ENCODE measurements at regions of chr4 and their contacts with region 1.

Region 1: GRCh38 chr4:56544573-56545131 is 39.1 kb downstream of the ARL9 start:
- DNase-seq: peak; percentile 85
- H3K4me3 ChIP-seq: peak overlapping the region in 2 of 3 experiments; percentile 43 to 51
- H3K27ac ChIP-seq: no peak overlapping the region
- H3K4me1 ChIP-seq: peaks cover 3% of the 10 kb centered on the region
- H3K27me3 ChIP-seq: peaks cover 8 to 9% of the 10 kb centered on the region in 2 experiments
- CTCF ChIP-seq: peak; percentile 98 to 99
- POLR2A ChIP-seq: no peak

Region 2: DNA sequence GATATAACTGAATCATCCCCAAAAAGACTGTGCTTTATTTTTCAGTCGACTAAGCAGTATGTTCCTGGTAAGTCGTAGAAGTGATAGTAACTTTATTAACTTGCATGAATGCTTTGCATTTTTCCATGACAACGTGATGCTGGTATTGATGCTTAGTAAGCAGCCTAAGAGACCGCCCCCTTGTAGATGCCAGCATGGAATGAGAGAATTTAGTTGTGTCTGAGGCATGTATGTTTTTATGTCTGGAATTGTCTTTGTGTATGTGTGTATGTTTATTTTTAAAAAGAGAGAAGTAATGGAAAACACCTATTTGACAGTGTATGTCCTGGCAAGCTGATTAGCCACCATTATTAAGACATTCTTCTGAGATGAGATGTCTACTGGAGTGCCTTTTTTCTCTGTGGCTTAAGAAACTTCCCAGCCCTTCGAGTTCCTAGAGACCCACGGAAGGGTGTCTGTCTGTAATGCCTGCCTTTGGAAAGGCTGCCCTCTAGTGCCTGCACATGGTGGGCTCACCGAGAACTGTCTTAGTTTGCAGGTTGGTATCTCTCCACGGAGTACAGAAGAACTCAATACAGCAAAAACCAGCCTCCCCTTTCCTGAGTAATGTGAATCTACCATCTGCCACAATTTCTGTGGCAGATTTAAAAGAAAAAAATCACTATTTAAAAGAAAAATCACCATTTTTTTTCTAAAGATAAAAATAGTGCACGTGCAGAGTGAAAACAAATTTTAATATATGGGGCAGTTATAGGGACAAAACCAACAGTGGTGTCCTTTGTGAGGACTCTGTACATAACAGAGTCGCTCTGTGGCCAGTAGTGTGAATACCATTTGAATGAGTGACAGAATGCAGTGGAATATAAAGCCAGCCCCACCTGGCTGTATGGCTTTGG is 243.2 kb before region 1 on chr4:
- CTCF ChIA-PET with region 1: no interaction called
- POLR2A ChIA-PET with region 1: no interaction called
- dilution Hi-C with region 1: no loop called
- intact Hi-C with region 1: loop called (anchors 10 kb)
- DNase-seq: peak; percentile 84
- H3K4me3 ChIP-seq: peak overlapping the region in 1 of 3 experiments; percentile 23
- H3K27ac ChIP-seq: peak overlapping the region; percentile 35
- H3K4me1 ChIP-seq: no peaks in the 10 kb centered on the region
- H3K27me3 ChIP-seq: no peaks in the 10 kb centered on the region
- CTCF ChIP-seq: peak; percentile 90
- POLR2A ChIP-seq: no peak

Region 3: DNA sequence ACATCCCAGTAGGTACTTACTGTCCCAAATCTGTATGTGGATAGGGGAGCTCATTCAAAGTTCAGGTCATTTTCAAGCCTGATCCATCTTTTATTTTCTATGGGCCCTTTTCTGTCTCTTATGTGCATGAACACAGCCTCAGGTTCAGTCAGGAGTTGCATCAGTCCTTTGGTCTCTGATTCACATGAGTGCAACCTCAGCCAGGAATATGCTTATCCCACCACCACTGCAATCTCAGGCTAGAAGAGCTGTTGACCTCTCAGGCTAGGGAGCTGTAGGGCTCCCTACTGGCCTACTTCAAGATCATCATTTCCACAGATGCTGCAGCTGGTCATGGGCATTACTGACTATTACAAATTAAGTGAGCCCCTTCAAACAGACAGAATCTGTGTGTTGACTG is 184.6 kb before region 1 on chr4:
- CTCF ChIA-PET with region 1: no interaction called
- POLR2A ChIA-PET with region 1: no interaction called
- dilution Hi-C with region 1: no loop called
- intact Hi-C with region 1: no loop called
- DNase-seq: no peak
- H3K4me3 ChIP-seq: no peak overlapping the region
- H3K27ac ChIP-seq: no peak overlapping the region
- H3K4me1 ChIP-seq: no peaks in the 10 kb centered on the region
- H3K27me3 ChIP-seq: no peaks in the 10 kb centered on the region
- CTCF ChIP-seq: no peak
- POLR2A ChIP-seq: no peak

Region 4: GRCh38 chr4:56424697-56425514 is 119.7 kb before region 1 on chr4:
- CTCF ChIA-PET with region 1: interaction called, 4 read pairs
- POLR2A ChIA-PET with region 1: no interaction called
- dilution Hi-C with region 1: no loop called
- intact Hi-C with region 1: loop called (anchors 1 kb)
- DNase-seq: peak; percentile 61
- H3K4me3 ChIP-seq: no peak overlapping the region
- H3K27ac ChIP-seq: no peak overlapping the region
- H3K4me1 ChIP-seq: peaks cover 6% of the 10 kb centered on the region
- H3K27me3 ChIP-seq: no peaks in the 10 kb centered on the region
- CTCF ChIP-seq: peak; percentile 40 to 45
- POLR2A ChIP-seq: no peak

Region 5: GRCh38 chr4:56435306-56435926 is 109.2 kb before region 1 on chr4 and contains the start of gene PPAT:
- CTCF ChIA-PET with region 1: no interaction called
- POLR2A ChIA-PET with region 1: no interaction called
- dilution Hi-C with region 1: no loop called
- intact Hi-C with region 1: loop called (anchors 5 kb)
- DNase-seq: peak; percentile 100
- H3K4me3 ChIP-seq: peak within 1 kb of the TSS; percentile 77 to 86 (median 83)
- H3K27ac ChIP-seq: peak within 1 kb of the TSS; percentile 87
- H3K4me1 ChIP-seq: peaks cover 19% of the 10 kb centered on the region
- H3K27me3 ChIP-seq: no peaks in the 10 kb centered on the region
- CTCF ChIP-seq: peak in 1 of 2 donors; percentile 25
- POLR2A ChIP-seq: peak; percentile 83
- total RNA-seq, gene PPAT: 21.8 and 25.5 TPM in 2 replicates

Region 6: DNA sequence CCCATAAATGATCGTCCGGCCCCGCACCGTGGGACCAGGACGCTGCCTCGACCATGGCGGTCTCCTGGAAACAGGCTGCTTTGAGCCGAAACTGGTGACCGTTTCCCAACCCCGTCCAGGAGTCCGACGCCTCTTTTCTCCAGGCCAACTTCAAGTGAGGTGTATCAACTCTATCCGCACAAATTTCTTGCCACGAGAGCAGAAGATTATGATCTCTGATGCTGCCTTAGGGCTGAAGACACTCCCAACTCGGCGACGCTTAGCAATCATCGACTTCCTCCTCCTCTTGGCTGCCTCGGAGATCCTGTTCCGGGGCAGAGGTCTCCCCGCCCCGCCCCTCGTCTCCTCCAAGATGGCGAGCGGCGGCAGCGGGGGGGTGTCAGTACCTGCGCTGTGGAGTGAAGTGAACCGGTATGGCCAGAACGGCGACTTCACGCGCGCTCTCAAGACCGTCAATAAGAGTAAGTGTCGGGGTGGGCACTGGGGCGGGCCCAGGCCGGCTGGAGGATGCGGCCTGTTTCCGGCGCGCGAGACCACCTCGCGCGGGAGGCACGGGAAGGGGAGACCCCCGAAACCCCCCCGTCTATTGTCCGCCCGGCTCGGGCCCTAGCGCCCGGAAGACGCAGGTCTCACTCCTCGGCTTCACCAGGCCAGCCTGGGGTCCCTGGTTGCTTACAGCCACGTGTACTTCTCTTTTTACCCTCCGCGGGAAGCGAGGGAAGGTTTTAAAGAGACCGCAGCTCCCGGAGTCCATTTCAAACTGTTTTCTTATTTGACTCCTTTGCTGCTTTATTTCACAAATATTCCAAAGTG is 77.2 kb before region 1 on chr4 and contains the start of gene SRP72:
- CTCF ChIA-PET with region 1: interaction called, 7 read pairs
- POLR2A ChIA-PET with region 1: no interaction called
- dilution Hi-C with region 1: no loop called
- intact Hi-C with region 1: loop called (anchors 1 kb)
- DNase-seq: peak; percentile 91
- H3K4me3 ChIP-seq: peak within 1 kb of the TSS; percentile 67 to 99 (median 98)
- H3K27ac ChIP-seq: peak within 1 kb of the TSS; percentile 94
- H3K4me1 ChIP-seq: peaks cover 27% of the 10 kb centered on the region
- H3K27me3 ChIP-seq: no peaks in the 10 kb centered on the region
- CTCF ChIP-seq: no peak
- POLR2A ChIP-seq: peak; percentile 90
- total RNA-seq, gene SRP72: 132 and 145 TPM in 2 replicates

Region 7: DNA sequence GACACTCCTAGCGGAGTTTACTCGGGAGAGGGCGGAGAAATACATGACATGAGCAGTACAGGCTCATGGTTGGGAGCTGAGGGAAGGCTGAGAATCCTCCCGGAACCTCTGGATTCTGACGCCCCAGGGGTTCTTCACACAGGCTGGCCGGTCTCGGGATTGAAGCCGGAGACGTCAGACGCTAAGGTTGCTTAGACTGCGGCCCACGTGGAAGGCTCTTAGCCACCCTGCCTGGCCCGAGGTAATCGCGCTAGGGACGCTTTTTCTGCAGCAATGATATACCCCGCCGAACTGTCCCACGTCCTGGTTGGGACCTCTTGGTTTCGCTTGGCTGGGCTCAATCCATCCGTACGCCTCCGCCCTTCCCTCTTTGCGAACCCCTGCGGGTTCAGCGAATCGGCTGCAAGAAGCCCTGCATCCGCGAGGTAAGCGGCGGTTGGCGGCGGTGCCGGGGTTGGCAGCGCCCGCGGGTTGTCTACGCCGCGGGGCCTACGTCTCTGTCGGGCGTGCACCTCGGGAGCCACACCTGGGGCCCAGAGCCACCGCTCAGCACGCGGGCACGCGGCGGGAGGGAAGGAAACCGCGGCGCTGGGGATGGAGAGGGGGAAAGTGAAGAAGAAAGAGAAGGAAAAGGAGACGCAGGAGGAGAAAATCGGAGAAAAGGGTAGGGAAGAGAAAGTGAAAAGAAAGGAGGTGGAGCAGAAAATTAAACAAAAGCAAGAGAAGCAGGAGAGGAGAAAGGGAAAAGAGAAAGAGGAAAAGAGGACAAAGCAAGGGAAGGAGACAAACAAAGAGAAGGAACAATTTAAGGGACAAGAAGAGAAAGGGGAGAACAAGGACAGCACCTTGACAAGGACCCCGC is 39.2 kb before region 1 on chr4 and contains the start of gene ARL9:
- CTCF ChIA-PET with region 1: no interaction called
- POLR2A ChIA-PET with region 1: no interaction called
- dilution Hi-C with region 1: no loop called
- intact Hi-C with region 1: loop called (anchors 1 kb)
- DNase-seq: peak; percentile 61
- H3K4me3 ChIP-seq: peak within 1 kb of the TSS; percentile 48 to 69 (median 67)
- H3K27ac ChIP-seq: no peak within 1 kb of the TSS
- H3K4me1 ChIP-seq: peaks cover 13% of the 10 kb centered on the region
- H3K27me3 ChIP-seq: no peaks in the 10 kb centered on the region
- CTCF ChIP-seq: no peak
- POLR2A ChIP-seq: no peak
- total RNA-seq, gene ARL9: 0.51 and 1.1 TPM in 2 replicates

Region 8: GRCh38 chr4:56530269-56531148 is 14.1 kb before region 1 on chr4:
- CTCF ChIA-PET with region 1: interaction called, 14 read pairs
- POLR2A ChIA-PET with region 1: no interaction called
- dilution Hi-C with region 1: no loop called
- intact Hi-C with region 1: no loop called
- DNase-seq: peak; percentile 72
- H3K4me3 ChIP-seq: peak overlapping the region; percentile 27 to 65 (median 46)
- H3K27ac ChIP-seq: no peak overlapping the region
- H3K4me1 ChIP-seq: peaks cover 7% of the 10 kb centered on the region
- H3K27me3 ChIP-seq: peaks cover 26 to 35% of the 10 kb centered on the region in 2 experiments
- CTCF ChIP-seq: no peak
- POLR2A ChIP-seq: peak; percentile 43

Measured in endothelial cell of umbilical vein (primary cell).